PC-3 (cell line): ENCODE measurements at regions of chr5 and their contacts with region 1.

Region 1: DNA sequence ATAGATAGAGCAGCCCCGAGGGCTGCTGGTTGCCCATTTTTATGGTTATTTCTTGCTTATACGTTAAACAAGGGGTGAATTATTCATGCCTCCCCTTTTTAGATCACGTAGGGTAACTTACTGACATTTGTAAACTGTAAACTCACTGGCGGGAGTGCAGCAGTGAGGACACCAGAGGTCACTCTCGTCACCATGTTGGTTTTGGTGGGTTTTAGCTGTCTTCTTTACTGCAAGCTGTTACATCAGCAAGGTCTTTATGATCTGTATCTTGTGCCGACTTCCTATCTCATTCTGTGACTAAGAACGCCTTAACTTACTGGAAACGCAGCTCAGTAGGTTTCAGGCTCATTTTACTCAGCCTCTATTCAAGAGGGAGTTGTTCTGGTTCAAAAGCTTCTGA is 155.0 kb upstream of the PRDM9 start:
- DNase-seq: peak; percentile 81
- ATAC-seq: peak; percentile 93
- H3K4me3 ChIP-seq: no peak overlapping the region
- H3K27ac ChIP-seq: no peak overlapping the region
- H3K4me1 ChIP-seq: no peaks in the 10 kb centered on the region
- H3K27me3 ChIP-seq: no peaks in the 10 kb centered on the region
- CTCF ChIP-seq: peak; percentile 72

Region 2: GRCh38 chr5:23314827-23315226 is 37.6 kb before region 1 on chr5:
- CTCF ChIA-PET with region 1: no interaction called
- POLR2A ChIA-PET with region 1: no interaction called
- intact Hi-C with region 1: no loop called
- DNase-seq: peak; percentile 92
- ATAC-seq: peak; percentile 95
- H3K4me3 ChIP-seq: no peak overlapping the region
- H3K27ac ChIP-seq: peak overlapping the region; percentile 47
- H3K4me1 ChIP-seq: peaks cover 26% of the 10 kb centered on the region
- H3K27me3 ChIP-seq: no peaks in the 10 kb centered on the region
- CTCF ChIP-seq: no peak

Region 3: DNA sequence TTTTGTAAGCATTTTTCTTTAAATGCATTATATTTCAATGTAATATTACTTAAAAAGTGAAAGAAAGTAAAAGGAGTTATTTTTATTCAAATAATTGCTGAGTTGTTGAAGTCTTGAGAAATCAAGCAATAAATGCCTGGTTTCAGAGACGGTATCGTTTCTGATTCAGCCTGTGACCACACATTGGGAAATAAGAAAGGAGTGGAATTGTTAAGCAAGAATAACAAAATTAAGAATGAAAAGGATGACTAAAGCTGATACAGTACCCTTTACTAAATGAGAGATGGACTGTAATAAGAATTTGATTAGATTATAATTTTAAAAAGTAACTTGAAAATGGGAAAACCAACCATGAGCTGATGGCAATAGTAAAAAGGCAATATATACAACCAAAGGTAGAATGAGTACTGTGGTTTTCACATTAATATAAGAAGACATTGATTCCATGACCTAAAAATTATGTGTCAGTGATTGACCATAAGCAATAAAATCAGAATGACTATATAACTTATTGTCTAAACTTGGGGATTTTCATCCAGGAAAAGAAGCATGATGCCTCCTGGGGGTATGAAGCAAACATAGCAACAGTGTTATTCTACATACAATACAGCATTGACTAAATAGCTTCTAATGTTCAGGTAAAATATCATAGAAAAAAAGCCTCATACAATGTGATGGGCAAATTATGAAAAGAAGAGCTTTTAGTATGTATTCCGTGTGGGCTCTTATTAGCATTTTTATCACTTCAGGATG is 53.1 kb after region 1 on chr5:
- CTCF ChIA-PET with region 1: interaction called, 7 read pairs
- POLR2A ChIA-PET with region 1: no interaction called
- intact Hi-C with region 1: loop called (anchors 1 kb)
- DNase-seq: peak; percentile 44
- ATAC-seq: no peak
- H3K4me3 ChIP-seq: no peak overlapping the region
- H3K27ac ChIP-seq: no peak overlapping the region
- H3K4me1 ChIP-seq: peaks cover 8% of the 10 kb centered on the region
- H3K27me3 ChIP-seq: no peaks in the 10 kb centered on the region
- CTCF ChIP-seq: peak; percentile 63

Region 4: GRCh38 chr5:23494538-23494937 is 142.1 kb after region 1 on chr5:
- CTCF ChIA-PET with region 1: no interaction called
- POLR2A ChIA-PET with region 1: no interaction called
- intact Hi-C with region 1: no loop called
- DNase-seq: no peak
- ATAC-seq: peak; percentile 73
- H3K4me3 ChIP-seq: no peak overlapping the region
- H3K27ac ChIP-seq: no peak overlapping the region
- H3K4me1 ChIP-seq: no peaks in the 10 kb centered on the region
- H3K27me3 ChIP-seq: no peaks in the 10 kb centered on the region
- CTCF ChIP-seq: no peak

Region 5: DNA sequence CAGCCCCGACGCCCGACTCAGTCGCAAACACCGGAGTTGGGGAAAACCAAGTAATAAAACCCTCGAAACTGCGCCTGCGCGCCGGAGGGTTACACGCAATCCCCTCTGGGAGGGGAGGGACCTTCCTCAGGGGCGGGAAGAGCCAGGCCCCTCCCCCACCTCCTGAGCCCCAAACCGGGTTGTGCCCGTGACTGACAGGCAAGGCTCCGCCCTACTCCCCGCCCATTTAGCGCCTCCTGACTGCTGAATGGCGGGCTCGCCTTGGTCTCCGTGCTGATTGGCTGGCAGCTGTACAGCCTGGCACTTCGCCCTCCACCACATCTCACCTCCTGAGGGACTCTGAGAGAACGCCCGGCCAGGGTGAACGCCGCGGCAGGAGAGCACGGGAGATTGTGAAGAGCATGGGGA is 154.8 kb after region 1 on chr5 and contains the start of gene PRDM9:
- CTCF ChIA-PET with region 1: interaction called, 3 read pairs
- POLR2A ChIA-PET with region 1: no interaction called
- intact Hi-C with region 1: loop called (anchors 1 kb)
- DNase-seq: peak; percentile 98
- ATAC-seq: peak; percentile 93
- H3K4me3 ChIP-seq: peak within 1 kb of the TSS; percentile 70
- H3K27ac ChIP-seq: peak within 1 kb of the TSS; percentile 75
- H3K4me1 ChIP-seq: peaks cover 7% of the 10 kb centered on the region; the same call in 1 of the 2 replicates
- H3K27me3 ChIP-seq: no peaks in the 10 kb centered on the region
- CTCF ChIP-seq: no peak
- total RNA-seq, gene PRDM9: 0.11 and 0.12 TPM in 2 replicates

Region 6: DNA sequence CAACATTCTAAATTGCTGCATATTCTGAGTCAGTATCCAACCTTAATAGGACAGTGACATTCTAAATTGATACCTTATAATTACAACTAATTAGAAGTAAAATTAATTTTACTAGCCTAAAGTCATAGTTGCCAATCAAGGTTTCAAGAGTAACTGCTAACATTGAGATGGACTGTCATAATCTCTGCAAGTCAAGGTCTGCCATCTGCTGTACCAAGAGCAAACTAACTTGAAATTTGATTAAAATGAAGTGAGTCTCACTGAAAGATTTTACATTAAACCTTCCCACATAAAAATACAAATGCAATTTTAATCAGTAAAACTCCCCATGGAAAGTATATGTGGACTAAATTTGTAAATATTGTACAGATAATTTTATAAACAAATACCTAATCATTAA is 390.3 kb after region 1 on chr5:
- CTCF ChIA-PET with region 1: no interaction called
- POLR2A ChIA-PET with region 1: no interaction called
- intact Hi-C with region 1: loop called (anchors 1 kb)
- DNase-seq: peak; percentile 19
- ATAC-seq: no peak
- H3K4me3 ChIP-seq: no peak overlapping the region
- H3K27ac ChIP-seq: no peak overlapping the region
- H3K4me1 ChIP-seq: peaks cover 7% of the 10 kb centered on the region; the same call in 1 of the 2 replicates
- H3K27me3 ChIP-seq: no peaks in the 10 kb centered on the region
- CTCF ChIP-seq: peak; percentile 55